ENCODE measurements at regions of chr12 and their contacts with region 1.

Region 1: DNA sequence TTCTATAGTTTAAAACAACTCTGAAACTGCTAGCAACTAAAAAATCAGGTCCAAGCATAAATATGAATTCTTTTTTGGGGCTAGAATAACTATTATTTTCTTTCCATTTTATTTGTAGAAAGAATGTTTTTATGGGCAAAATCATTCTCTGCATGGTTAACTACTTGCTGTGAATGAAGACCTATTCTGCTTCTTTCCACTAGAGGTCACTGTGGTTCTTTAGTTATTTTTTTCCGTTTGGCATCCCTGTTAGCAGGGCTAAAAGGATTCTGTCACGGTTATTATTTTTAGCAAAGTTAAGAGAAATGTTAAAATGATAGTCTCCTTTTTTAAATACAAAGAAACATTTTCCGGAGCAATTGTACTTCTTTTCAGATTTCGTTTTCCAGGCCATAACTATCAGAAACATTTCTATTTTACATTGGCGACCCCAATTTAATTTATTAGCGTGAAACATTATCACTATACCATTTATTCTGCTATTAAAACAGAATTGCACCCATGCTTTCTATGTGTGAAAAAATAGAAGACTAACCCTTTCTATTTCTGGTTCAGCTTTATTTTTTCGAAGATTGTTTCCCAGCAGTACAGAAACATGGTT is 404.8 kb downstream of the ATP23 start:
- DNase-seq: peak; percentile 79
- ATAC-seq: peak; percentile 77
- H3K4me3 ChIP-seq: no peak overlapping the region
- H3K27ac ChIP-seq: peak overlapping the region; percentile 26
- H3K4me1 ChIP-seq: peaks cover 18% of the 10 kb centered on the region
- H3K27me3 ChIP-seq: no peaks in the 10 kb centered on the region
- CTCF ChIP-seq: peak; percentile 89

Region 2: GRCh38 chr12:57918147-57918546 is 428.0 kb before region 1 on chr12:
- CTCF ChIA-PET with region 1: no interaction called
- POLR2A ChIA-PET with region 1: no interaction called
- intact Hi-C with region 1: no loop called
- DNase-seq: no peak
- ATAC-seq: no peak
- H3K4me3 ChIP-seq: no peak overlapping the region
- H3K27ac ChIP-seq: no peak overlapping the region
- H3K4me1 ChIP-seq: no peaks in the 10 kb centered on the region
- H3K27me3 ChIP-seq: no peaks in the 10 kb centered on the region
- CTCF ChIP-seq: no peak

Region 3: DNA sequence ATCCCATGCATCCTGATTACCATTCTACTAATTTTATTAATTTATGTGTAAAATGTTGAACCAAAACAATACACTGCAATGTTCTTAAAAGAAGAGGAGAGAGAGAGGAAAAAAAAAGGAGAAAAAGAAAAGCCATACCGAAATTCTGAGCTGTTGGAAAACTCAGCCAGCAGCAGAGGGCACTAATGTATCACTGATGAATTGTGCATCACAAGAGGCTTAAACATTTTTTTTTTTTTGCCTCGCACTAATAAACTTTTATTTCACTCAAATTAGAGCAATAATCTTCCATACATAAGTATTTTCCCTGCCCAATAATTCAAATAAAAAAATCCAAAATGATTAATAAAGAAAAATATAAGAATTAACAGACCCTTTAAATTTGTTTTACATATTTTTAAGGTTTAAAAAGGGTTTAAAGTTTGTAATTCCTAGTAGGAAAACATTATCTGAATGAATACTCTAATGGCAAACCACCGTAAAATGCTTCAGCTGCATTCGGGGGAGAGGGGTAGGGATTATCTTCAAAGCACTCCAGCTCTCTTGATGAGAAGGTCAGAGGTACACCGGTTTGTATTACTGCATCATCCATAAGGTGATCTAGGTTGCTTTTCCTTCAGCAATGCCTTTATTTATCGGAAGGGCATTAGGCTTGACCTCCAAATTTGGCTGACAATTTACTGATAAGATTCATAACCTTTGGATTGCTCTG is 362.8 kb before region 1 on chr12:
- CTCF ChIA-PET with region 1: no interaction called
- POLR2A ChIA-PET with region 1: no interaction called
- intact Hi-C with region 1: loop called (anchors 2 kb)
- DNase-seq: peak; percentile 73
- ATAC-seq: no peak
- H3K4me3 ChIP-seq: no peak overlapping the region
- H3K27ac ChIP-seq: no peak overlapping the region
- H3K4me1 ChIP-seq: peaks cover 12% of the 10 kb centered on the region; the same call in 1 of the 2 replicates
- H3K27me3 ChIP-seq: no peaks in the 10 kb centered on the region
- CTCF ChIP-seq: peak; percentile 78

Region 4: DNA sequence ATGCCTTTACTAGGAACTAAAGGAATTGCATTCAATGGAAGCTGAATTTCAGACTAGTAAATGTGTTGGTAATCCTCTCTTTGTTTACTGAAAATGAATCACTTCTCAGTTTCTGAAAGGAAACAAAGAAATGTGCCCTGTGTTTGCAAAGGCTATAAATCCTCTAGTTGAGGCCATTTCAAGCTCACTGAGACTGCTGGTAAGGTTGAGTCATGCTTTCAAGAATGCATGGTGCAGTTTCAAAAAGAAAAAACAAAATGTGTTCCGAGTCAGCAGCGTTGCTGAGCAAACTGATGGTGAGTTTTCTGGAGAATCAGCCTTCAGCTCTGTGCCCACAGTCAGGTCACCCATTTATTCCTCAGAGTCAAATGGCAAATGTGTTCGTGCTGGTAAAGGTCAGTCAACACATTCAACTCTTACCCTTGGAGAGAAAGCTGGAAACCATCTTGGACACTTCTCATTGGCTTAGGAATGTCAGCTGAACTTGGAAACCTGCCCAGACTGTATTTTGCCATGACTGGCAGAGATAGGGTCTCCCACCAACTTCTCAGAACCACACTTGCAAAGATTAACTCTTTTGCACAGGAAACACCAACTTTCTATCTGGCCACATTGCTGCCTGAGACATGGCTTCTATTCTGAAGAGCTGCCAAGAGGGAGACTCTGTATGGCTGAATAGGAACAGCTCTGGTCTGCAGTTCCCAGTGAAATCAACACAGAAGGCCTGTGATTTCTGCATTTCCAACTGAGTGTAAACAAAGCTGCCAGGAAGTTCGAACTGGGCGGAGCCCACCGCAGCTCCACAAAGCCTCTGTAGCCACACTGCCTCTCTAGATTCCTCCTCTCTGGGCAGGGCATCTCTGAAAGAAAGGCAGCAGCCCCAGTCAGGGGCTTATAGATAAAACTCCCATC is 79.6 kb after region 1 on chr12:
- CTCF ChIA-PET with region 1: no interaction called
- POLR2A ChIA-PET with region 1: interaction called, 4 read pairs
- intact Hi-C with region 1: loop called (anchors 5 kb)
- DNase-seq: peak; percentile 95
- ATAC-seq: peak; percentile 87
- H3K4me3 ChIP-seq: peak overlapping the region; percentile 51
- H3K27ac ChIP-seq: peak overlapping the region; percentile 99
- H3K4me1 ChIP-seq: peaks cover 42% of the 10 kb centered on the region
- H3K27me3 ChIP-seq: no peaks in the 10 kb centered on the region
- CTCF ChIP-seq: no peak

Region 5: DNA sequence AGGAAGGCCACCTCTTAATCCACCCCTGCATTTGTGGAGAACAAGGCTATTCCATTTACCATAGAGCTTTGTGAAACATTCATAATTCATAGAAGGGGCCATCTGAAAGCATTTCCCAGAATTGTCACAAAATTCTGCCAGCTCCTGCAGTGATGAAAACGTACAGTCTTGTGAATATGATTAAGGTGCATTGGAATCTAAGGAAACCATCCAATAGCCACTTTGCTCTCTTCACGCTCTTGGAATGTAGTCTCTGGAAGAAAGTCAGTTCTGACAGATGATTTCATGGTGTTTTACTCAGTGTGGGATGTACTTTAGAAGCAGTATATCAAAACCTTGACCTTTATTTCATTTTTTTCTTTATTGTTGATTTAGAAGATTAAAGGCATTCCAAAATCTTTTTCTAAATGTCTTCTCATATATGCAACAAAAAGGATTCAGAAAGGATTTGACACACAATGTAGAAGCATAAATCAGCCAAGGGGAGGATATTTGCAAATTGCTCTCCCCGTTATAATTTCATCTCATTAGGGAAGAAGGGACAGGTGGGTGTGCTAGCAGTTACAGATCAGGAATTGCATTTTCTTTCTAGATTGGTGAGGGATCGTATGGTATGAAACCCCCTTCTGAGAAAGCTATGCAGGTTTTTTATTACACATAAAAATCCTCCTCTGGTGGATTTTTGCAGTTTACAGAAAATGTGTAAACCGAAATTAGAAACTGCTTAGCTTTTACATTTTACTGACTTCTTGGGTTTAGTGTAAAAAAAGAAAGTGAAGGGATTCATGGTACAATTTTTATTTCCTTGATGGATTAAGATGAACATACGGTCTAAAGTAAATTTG is 184.0 kb after region 1 on chr12:
- CTCF ChIA-PET with region 1: no interaction called
- POLR2A ChIA-PET with region 1: interaction called, 8 read pairs
- intact Hi-C with region 1: loop called (anchors 2 kb)
- DNase-seq: peak; percentile 86
- ATAC-seq: peak; percentile 46
- H3K4me3 ChIP-seq: peak overlapping the region; percentile 13
- H3K27ac ChIP-seq: peak overlapping the region; percentile 95
- H3K4me1 ChIP-seq: peaks cover 52% of the 10 kb centered on the region
- H3K27me3 ChIP-seq: no peaks in the 10 kb centered on the region
- CTCF ChIP-seq: no peak

Region 6: DNA sequence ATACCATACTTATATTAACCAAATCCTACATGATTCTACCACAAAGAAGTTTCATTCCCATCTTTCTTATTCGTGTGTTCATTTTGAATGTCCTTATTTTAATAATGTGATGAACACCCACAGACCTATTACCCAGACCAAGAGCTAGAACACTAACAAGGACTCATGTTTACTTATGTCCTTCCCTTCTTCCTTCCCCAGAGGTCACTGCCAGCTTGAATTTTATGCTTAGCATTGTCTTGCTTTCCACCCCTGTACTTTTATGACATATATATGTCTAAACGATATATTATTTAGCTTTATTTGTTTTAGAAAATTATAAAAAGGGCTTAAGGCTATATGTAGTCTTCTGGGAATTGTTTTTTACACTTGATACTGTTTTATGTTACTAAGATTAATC is 335.6 kb after region 1 on chr12:
- CTCF ChIA-PET with region 1: no interaction called
- POLR2A ChIA-PET with region 1: no interaction called
- intact Hi-C with region 1: loop called (anchors 2 kb)
- DNase-seq: peak; percentile 17
- ATAC-seq: peak; percentile 48
- H3K4me3 ChIP-seq: no peak overlapping the region
- H3K27ac ChIP-seq: no peak overlapping the region
- H3K4me1 ChIP-seq: no peaks in the 10 kb centered on the region
- H3K27me3 ChIP-seq: no peaks in the 10 kb centered on the region
- CTCF ChIP-seq: 0 out of 2 replicates have a peak, but pooled peaks have one; percentile 24

Region 7: GRCh38 chr12:58877242-58877743 is 531.2 kb after region 1 on chr12:
- CTCF ChIA-PET with region 1: no interaction called
- POLR2A ChIA-PET with region 1: no interaction called
- intact Hi-C with region 1: loop called (anchors 1 kb)
- DNase-seq: peak; percentile 99
- ATAC-seq: peak; percentile 99
- H3K4me3 ChIP-seq: no peak overlapping the region
- H3K27ac ChIP-seq: peak overlapping the region; percentile 32
- H3K4me1 ChIP-seq: peaks cover 17% of the 10 kb centered on the region
- H3K27me3 ChIP-seq: no peaks in the 10 kb centered on the region
- CTCF ChIP-seq: no peak

Region 8: DNA sequence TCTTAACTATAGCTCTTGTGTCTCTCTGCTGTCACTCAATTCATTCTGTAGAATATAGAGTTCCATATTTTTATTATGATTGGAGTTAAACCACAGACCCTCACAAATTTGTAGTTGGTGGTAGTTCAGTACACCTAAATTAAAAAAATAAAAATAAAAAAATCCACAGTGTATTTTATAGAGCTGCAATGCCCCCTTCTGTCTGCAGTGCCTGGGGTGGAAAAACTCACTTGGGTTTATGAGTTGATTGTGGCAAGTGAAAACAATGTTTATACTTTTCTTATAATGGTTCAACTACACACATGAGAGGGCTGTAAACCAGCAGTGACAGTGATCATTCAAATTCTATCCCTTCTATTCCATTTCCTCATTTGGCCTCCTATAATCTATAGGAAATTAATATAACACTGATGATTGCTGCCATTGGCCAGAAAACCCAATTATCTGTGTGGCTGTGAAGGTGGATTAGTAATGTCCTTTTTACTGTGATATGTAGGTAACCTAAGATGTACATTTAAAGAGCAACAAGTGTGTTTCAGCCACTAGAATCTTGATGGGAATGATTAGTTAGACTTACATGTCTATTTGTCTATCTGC is 741.0 kb after region 1 on chr12:
- CTCF ChIA-PET with region 1: no interaction called
- POLR2A ChIA-PET with region 1: no interaction called
- intact Hi-C with region 1: loop called (anchors 1 kb)
- DNase-seq: peak; percentile 37
- ATAC-seq: peak; percentile 50
- H3K4me3 ChIP-seq: no peak overlapping the region
- H3K27ac ChIP-seq: no peak overlapping the region
- H3K4me1 ChIP-seq: 0 out of 2 replicates have a peak, but pooled peaks cover 4% of the 10 kb centered on the region
- H3K27me3 ChIP-seq: no peaks in the 10 kb centered on the region
- CTCF ChIP-seq: peak; percentile 78

Measured in PC-3 (cell line).